ENCODE measurements at regions of chr5 and their contacts with region 1.

Region 1: DNA sequence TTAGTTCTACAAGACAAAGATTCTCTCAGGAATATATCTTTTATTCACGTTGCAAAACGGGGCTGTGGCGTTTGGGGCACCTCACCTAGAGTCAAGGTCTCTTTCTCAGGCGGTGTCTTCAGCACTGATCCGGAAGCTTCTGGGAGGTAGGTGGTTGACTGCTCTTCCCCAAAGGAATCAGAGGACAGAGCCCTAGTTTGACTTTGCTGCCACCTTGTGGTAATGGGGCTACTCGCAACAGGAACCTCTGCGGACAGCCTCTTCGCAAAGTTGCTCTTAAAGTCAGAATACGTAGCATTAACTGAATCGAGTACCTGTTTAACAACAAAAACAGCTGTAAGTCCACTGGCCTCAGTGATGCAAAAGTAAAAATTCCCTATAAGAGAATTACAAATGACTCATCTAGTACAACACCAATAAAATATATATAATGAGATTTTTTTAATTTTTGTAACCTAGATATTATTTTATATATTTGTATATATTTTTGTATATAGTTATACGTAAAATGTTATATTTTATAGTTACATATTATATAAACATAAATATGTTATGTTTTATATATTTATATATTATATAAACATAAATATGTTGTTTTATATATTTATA is 13.3 kb upstream of the GPX8 start:
- DNase-seq: peak; percentile 35
- ATAC-seq: peak; percentile 58
- H3K4me3 Mint-ChIP-seq: no peak overlapping the region
- H3K27ac Mint-ChIP-seq: no peak overlapping the region
- H3K4me1 Mint-ChIP-seq: no peaks in the 10 kb centered on the region
- H3K27me3 Mint-ChIP-seq: peaks cover 14% of the 10 kb centered on the region
- CTCF ChIP-seq: peak; percentile 94

Region 2: DNA sequence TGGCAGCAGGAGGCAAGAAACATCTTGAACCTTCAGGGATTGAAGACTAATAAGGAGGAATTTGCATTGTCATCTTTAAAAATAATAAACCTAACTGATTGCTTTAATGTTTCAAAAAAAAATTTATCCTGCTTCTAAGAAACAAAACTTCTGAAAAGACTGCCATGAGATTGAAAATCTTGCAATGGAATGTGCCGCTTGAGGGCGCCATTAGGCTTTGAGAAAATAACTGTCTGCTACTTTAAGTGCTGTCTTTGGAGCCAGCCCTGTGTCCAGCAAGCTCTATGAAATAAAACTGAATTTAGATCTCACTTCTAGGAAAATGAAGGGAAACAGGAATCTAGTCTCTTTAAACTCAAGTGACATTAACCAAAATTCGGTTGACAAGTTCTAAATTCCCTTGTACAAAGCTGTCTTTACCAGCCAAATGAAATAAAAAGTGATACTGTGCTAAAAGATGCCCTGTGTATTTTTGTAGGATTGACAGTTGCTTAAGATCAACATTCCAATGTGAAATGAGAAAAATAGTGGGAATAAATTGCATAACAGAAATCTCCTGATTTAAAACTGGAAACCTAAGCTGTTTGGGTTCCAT is 240.6 kb before region 1 on chr5:
- CTCF ChIA-PET with region 1: interaction called, 7 read pairs
- POLR2A ChIA-PET with region 1: no interaction called
- intact Hi-C with region 1: loop called (anchors 1 kb)
- DNase-seq: no peak
- ATAC-seq: no peak
- H3K4me3 Mint-ChIP-seq: no peak overlapping the region
- H3K27ac Mint-ChIP-seq: no peak overlapping the region
- H3K4me1 Mint-ChIP-seq: peaks cover 11% of the 10 kb centered on the region
- H3K27me3 Mint-ChIP-seq: peaks cover 48% of the 10 kb centered on the region
- CTCF ChIP-seq: no peak

Region 3: GRCh38 chr5:54944364-54944763 is 202.3 kb before region 1 on chr5:
- CTCF ChIA-PET with region 1: interaction called, 8 read pairs
- POLR2A ChIA-PET with region 1: no interaction called
- intact Hi-C with region 1: loop called (anchors 1 kb)
- DNase-seq: no peak
- ATAC-seq: no peak
- H3K4me3 Mint-ChIP-seq: no peak overlapping the region
- H3K27ac Mint-ChIP-seq: no peak overlapping the region
- H3K4me1 Mint-ChIP-seq: no peaks in the 10 kb centered on the region
- H3K27me3 Mint-ChIP-seq: peaks cover 8% of the 10 kb centered on the region
- CTCF ChIP-seq: no peak

Region 4: GRCh38 chr5:55004729-55005128 is 141.9 kb before region 1 on chr5:
- CTCF ChIA-PET with region 1: no interaction called
- POLR2A ChIA-PET with region 1: no interaction called
- intact Hi-C with region 1: no loop called
- DNase-seq: no peak
- ATAC-seq: no peak
- H3K4me3 Mint-ChIP-seq: no peak overlapping the region
- H3K27ac Mint-ChIP-seq: no peak overlapping the region
- H3K4me1 Mint-ChIP-seq: no peaks in the 10 kb centered on the region
- H3K27me3 Mint-ChIP-seq: peaks cover 6% of the 10 kb centered on the region
- CTCF ChIP-seq: no peak

Region 5: GRCh38 chr5:55123365-55123764 is 23.3 kb before region 1 on chr5:
- CTCF ChIA-PET with region 1: no interaction called
- POLR2A ChIA-PET with region 1: no interaction called
- intact Hi-C with region 1: no loop called
- DNase-seq: no peak
- ATAC-seq: no peak
- H3K4me3 Mint-ChIP-seq: no peak overlapping the region
- H3K27ac Mint-ChIP-seq: no peak overlapping the region
- H3K4me1 Mint-ChIP-seq: no peaks in the 10 kb centered on the region
- H3K27me3 Mint-ChIP-seq: peaks cover 13% of the 10 kb centered on the region
- CTCF ChIP-seq: no peak

Region 6: DNA sequence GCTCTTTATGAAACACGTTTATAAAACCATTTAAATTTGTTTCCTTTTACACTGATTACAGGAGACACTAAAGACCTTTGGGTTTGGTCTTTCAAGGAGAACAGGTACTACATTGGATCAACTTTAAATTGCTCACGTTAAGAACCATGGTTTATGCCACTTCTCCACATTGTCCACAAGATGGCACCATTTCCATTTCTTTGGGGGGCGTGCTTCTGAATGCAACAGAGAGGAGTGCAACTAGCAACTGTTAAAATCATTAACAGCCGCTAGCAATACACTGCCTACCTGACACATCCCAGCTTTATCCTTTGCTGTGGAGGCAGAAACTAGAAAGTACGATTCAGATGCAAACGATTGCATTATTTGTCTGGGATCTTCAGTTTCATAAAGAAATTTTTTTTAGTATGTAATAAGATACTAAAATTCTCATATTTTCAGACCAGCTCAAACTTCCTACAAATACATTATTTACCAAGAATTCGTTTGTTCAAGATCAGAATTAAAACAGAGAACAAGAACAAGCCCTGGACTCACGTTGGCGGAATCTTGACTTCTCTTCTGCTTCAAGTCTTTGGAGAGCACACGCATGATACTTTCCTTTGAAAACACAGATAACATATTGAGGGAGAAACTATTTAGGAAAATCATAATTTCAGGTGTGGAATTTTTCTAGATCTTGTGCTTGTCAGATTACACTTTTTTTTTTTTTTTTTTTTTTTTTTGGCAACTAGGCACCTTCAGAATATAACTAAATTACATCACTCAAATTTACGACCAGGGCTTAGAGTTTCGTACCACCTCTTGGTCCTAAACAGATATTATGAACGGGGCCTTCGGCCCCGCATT is 25.6 kb after region 1 on chr5:
- CTCF ChIA-PET with region 1: no interaction called
- POLR2A ChIA-PET with region 1: no interaction called
- intact Hi-C with region 1: no loop called
- DNase-seq: no peak
- ATAC-seq: peak; percentile 53
- H3K4me3 Mint-ChIP-seq: peak overlapping the region; percentile 88
- H3K27ac Mint-ChIP-seq: no peak overlapping the region
- H3K4me1 Mint-ChIP-seq: peaks cover 33% of the 10 kb centered on the region
- H3K27me3 Mint-ChIP-seq: peaks cover 51% of the 10 kb centered on the region
- CTCF ChIP-seq: peak; percentile 88